Activated CD4-positive, alpha-beta T cell treated with anti-CD3 and anti-CD28 coated beads for 36 hours (primary cell): ENCODE measurements at regions of chr2 and their contacts with region 1.

Region 1: DNA sequence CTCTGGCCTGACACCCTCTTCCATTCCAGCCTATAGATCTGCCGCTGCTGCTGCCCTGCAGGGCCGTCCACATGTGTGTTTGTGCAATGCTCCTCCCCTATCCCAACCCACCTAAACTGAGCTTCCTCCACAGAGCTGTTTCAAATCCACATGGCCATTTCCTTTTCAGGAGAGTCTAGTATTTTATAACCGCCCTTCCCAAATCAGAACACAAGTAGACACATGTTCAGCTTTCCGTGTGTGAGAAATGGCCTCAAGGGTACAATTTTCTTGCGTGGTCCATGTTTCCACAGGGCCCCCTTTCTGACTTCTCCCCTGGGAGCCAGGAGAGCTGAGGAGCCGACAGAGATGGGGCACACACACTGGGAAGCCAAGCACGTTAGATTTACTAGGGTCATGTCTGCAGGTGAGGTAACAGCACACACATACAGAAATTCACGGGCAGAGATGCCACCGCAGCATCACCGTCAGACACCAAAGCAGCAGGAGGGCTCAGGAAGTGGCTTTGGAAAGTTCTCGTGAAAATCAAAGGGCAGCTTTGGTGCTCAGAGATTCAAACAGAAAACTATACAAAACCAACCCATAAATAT is 102.9 kb upstream of the TGFA start:
- DNase-seq: peak; percentile 57
- ATAC-seq: peak; percentile 61
- H3K4me3 Mint-ChIP-seq: no peak overlapping the region
- H3K27ac Mint-ChIP-seq: peak overlapping the region; percentile 29
- H3K4me1 Mint-ChIP-seq: peaks cover 32% of the 10 kb centered on the region
- H3K27me3 Mint-ChIP-seq: no peaks in the 10 kb centered on the region

Region 2: DNA sequence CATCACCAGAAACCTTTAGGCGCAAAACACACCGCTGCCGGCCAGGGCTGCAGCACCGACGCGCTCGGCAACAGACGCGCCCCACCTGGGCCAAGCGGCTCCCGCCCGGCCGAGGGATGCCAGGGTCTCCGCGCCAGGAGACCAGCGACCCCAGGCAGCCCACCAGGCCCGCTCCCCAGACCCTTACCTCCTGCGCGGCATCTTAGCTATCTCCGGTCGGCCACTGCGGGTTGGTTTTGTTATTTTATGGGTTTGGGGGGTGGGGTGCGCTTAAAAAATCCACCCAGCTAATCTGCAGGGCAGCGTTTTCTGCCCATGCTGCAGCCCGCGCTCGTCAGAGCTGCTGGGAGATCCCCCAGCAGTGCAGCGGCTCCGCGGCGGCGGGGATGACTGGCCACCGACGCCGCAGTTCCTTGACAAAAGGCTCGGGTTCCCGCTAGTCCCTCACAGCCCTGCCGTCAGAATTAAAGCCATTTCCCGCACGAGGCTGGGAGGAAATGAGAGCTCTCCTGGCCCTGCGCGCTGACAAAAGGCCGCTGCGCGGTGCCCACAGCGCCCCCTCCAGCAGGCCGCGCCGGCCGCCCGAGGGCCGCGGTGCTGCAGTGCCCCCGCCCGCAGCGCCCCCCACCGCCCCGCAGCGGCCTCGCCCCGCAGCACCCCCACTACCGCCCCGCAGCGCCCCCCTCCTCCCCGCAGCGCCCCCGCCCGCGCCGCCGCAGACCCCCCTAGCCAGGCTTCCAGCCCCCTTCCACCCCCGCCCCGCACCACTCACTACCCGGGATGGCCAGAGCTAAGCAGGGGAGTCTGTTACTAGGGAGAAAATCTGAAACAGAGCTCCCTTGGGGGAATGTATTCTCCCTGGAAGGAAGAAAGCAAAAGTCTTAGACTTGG is 111.4 kb after region 1 on chr2 and contains the start of gene ADD2:
- CTCF ChIA-PET with region 1: interaction called, 7 read pairs
- POLR2A ChIA-PET with region 1: interaction called, 3 read pairs
- intact Hi-C with region 1: loop called (anchors 1 to 5 kb)
- DNase-seq: peak; percentile 85
- ATAC-seq: peak; percentile 90
- H3K4me3 Mint-ChIP-seq: peak within 1 kb of the TSS; percentile 84
- H3K27ac Mint-ChIP-seq: peak within 1 kb of the TSS; percentile 88
- H3K4me1 Mint-ChIP-seq: peaks cover 18% of the 10 kb centered on the region
- H3K27me3 Mint-ChIP-seq: peaks cover 26% of the 10 kb centered on the region
- total RNA-seq, gene ADD2: 26.9 to 31.5 TPM

Region 3: DNA sequence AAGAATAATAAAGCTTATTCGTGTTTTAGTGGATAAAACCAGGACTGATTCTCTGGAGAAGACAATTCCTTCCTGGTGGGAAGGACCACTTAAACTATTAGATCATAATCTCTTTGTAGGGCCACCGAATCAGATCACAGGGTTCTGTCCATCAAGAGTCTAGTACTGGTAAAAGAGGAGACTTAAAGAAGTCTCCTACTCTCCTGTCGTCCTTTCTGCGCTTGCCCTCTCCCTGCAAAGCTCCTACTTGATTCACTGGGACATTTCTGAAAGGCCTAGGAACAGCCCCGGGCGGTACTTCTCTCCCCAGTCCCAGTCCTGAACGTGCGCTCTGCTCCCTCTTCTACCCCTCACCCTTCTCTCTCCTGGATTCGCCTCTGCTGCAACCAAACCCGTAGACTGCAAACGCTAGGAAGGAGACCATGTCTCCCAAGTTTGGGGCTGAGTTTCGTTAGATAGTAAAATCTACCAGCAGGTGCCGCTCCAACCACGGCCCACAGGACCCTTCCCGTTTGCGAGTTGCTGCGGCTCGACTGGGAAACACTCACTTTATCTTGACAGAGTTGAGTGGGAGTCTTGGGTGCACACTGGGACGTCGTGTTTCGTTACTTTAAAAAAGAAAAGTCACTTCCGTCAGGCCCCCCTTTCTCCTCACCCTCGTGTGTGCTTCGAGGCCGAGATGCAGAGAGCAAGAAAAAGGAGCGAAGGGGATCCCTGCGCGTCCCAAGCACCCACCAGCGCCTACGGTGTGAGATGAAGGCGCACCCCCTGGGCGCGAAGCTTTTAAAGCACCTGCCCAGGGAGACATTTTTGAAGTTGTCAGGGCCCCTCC is 133.0 kb after region 1 on chr2:
- CTCF ChIA-PET with region 1: interaction called, 7 read pairs
- POLR2A ChIA-PET with region 1: no interaction called
- intact Hi-C with region 1: loop called (anchors 1 kb)
- DNase-seq: peak; percentile 88
- ATAC-seq: peak; percentile 84
- H3K4me3 Mint-ChIP-seq: peak overlapping the region; percentile 56
- H3K27ac Mint-ChIP-seq: peak overlapping the region; percentile 27
- H3K4me1 Mint-ChIP-seq: peaks cover 11% of the 10 kb centered on the region
- H3K27me3 Mint-ChIP-seq: peaks cover 50% of the 10 kb centered on the region